K562 (cell line): ENCODE measurements at regions of chr15 and their contacts with region 1.

Region 1: DNA sequence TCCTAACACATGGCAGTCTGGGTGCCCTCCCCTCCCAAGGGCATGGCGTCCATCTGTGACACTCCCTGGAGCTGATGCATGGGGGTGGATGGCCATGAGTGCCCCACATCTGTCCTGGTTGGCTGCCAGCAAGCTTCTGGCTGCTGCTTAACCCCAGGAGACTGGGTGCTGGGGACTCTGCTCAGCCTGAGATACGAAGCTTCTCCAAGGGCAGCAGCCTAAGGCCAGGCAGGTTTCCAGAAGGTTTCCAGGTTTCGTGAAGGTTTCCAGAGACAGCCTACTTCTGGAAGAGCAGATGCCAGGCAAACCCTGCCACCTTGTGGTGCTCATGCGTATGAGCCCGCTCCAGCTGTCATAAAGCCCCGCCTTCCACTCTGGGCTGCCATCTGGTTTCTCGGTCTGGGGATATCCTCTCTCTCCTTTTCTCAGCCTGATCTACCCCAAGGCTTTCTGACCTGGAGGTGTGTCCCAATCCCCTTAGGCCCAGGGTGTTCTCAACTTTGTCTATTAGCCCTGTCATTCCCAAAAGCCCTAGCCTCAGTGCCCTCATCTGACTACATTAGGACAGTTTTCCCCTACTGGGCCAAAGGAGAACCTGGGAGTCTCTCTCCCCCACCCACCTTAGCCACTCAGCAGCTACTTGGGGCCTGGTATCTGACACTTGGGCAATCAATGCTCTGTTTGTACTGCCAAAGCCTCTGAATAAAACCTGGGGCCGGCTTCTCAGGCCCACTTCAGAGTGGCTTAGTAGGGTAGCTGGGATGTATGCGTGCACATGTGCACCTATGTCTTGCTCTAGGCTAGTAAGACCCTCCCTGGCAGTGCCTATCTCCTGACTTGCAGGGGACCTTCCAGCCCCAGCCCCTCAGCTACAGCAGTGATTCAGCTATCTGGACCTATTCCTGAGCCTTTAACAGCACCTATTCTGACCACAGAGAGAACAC is 12.0 kb downstream of the MRPL46 start:
- DNase-seq: peak; percentile 57 to 64 (median 60)
- ATAC-seq: peak; percentile 90
- H3K4me3 ChIP-seq: no peak overlapping the region
- H3K27ac ChIP-seq: no peak overlapping the region
- H3K4me1 ChIP-seq: no peaks in the 10 kb centered on the region; a peak in 1 of 5 replicates
- H3K27me3 ChIP-seq: peaks cover 4 to 6% of the 10 kb centered on the region in 2 experiments; a peak in 2 of 5 replicates
- CTCF ChIP-seq: peak; percentile 69 to 74 (median 73)
- EP300 ChIP-seq: no peak
- POLR2A ChIP-seq: no peak
- RAD21 ChIP-seq: peak; percentile 14 to 54; a peak in 3 of 4 replicates

Region 2: DNA sequence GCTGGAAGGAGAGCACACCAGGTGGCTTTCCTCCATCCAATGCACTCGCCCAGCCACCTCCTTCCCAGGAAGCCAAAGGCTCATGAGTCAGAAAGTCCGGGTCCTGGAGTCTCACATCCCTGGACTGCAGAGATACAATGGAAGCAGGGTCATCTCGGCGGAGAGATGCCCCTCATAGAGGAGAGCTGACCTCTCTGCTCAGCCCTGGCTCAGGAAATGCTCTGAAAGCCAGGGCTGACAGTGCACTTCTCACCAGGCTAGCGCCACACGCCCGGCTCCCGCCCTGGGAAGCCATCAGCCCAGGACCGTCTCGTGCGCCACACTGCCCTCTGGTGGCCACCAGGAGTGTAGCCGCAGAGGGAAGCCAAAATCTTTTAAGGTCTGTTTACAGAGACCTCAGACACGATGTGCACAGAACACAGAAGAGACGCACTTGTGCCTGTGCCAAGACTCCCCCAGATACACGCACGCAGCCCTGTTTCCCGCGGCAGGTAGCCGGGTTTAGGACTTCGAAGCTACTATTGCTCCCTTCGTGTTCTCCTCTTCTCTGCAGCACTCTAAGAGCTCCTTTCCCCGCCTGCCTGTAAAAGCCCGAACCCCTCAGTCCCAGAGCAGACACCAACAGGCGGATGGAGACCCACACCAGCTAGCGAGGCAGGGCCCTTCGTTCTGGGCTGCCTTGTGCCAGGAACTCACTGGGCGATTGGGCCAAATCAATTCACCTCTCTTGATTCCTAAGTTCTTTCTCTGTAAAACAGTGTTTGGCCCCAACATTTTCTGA is 208.3 kb before region 1 on chr15:
- CTCF ChIA-PET with region 1: interaction called, 5 read pairs
- POLR2A ChIA-PET with region 1: no interaction called
- in situ Hi-C with region 1: no loop called
- intact Hi-C with region 1: loop called (anchors 5 kb)
- DNase-seq: peak; percentile 76 to 87 (median 79)
- ATAC-seq: peak; percentile 98
- H3K4me3 ChIP-seq: no peak overlapping the region
- H3K27ac ChIP-seq: no peak overlapping the region
- H3K4me1 ChIP-seq: no peaks in the 10 kb centered on the region
- H3K27me3 ChIP-seq: no peaks in the 10 kb centered on the region; a peak in 1 of 5 replicates
- CTCF ChIP-seq: peak; percentile 86 to 93 (median 92)
- EP300 ChIP-seq: no peak
- POLR2A ChIP-seq: no peak
- RAD21 ChIP-seq: peak; percentile 67 to 80

Region 3: GRCh38 chr15:88467073-88467934 is 12.2 kb after region 1 on chr15 and contains the starts of genes MRPL46 and MRPS11:
- CTCF ChIA-PET with region 1: no interaction called
- POLR2A ChIA-PET with region 1: interaction called, 16 read pairs
- in situ Hi-C with region 1: no loop called
- intact Hi-C with region 1: no loop called
- DNase-seq: peak; percentile 91 to 94 (median 92)
- ATAC-seq: peak; percentile 93
- H3K4me3 ChIP-seq: peak within 1 kb of the TSS; percentile 88
- H3K27ac ChIP-seq: peak within 1 kb of the TSS; percentile 99
- H3K4me1 ChIP-seq: peaks cover 5 to 15% of the 10 kb centered on the region in 2 experiments; a peak in 4 of 5 replicates
- H3K27me3 ChIP-seq: no peaks in the 10 kb centered on the region
- CTCF ChIP-seq: no peak
- EP300 ChIP-seq: no peak
- POLR2A ChIP-seq: peak; percentile 87
- RAD21 ChIP-seq: no peak
- polyA plus RNA-seq, gene MRPL46: 66.9 to 71.2 TPM
- polyA plus RNA-seq, gene MRPS11: 28.3 to 39.4 TPM

Region 4: DNA sequence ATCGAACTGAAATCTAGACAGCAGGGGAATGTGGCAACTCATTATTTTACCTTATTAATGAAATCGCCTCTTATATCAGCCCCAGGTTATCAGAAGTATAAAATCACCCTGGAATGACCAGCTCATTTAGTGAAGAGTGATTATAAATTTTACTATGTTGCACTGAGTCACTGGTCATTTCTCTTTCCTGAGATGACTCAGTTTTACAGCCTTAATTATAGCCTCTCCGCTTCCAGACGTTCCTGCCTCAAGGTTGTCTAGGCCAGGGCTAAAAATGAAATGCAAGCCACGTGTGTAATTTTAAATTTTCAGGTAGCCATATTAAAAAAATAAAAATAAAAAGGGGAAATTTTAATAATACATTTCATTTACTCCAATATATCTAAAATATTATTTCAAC is 58.1 kb after region 1 on chr15:
- CTCF ChIA-PET with region 1: no interaction called
- POLR2A ChIA-PET with region 1: no interaction called
- in situ Hi-C with region 1: no loop called
- intact Hi-C with region 1: no loop called
- DNase-seq: no peak
- ATAC-seq: no peak
- H3K4me3 ChIP-seq: no peak overlapping the region
- H3K27ac ChIP-seq: no peak overlapping the region
- H3K4me1 ChIP-seq: no peaks in the 10 kb centered on the region
- H3K27me3 ChIP-seq: no peaks in the 10 kb centered on the region
- CTCF ChIP-seq: no peak
- EP300 ChIP-seq: no peak
- POLR2A ChIP-seq: no peak
- RAD21 ChIP-seq: no peak